ENCODE measurements at regions of chr17 and their contacts with region 1.

Region 1: DNA sequence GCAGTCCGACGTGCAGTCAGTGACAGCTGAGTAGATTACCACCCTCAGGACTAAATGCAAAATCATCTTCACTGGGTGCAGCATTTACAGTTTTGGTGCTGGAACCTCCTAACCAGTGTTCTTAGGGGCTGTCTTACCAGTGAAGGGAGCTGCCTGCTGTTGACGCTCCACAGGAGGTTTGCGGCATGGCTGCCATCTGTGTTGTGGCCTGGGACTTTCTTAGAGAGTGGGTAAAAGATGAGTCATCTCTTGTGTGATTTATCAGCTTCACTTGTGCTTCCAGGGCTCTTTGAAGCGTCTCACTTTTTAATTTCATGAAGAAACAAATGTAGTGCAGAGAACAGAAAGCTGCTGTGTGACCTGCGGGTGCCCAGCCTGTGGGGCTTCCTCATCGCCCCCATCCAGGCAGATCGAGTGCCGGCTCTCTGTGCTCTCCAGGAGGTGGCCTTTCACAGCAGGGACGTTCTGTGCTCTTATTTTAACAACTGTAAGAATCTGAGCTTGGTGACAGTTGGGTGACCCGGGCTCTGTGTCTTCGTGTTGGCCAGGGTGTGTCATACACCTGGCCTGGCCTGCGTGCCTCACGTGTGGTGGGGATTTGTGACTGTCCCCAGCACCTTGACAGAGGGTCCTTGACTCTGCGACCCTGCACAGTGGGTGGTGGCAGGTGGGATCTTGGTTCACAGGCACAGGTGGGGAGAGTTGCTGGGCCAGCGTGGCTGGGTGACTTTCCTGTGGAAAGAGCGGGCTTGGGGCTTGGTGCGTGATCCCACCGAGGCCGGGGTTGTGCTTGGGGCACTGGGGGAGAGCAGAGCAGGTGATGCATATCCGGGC is 24.3 kb upstream of the ZNF750 start:
- DNase-seq: peak; percentile 42 to 95 (median 93)
- ATAC-seq: peak; percentile 94
- H3K4me3 ChIP-seq: peak overlapping the region; percentile 54
- H3K4me3 Mint-ChIP-seq: peak overlapping the region; percentile 73 to 88 (median 83)
- H3K27ac ChIP-seq: peak overlapping the region; percentile 72
- H3K27ac Mint-ChIP-seq: peak overlapping the region; percentile 63 to 98 (median 97)
- H3K4me1 ChIP-seq: peaks cover 49 to 54% of the 10 kb centered on the region in 2 donors
- H3K4me1 Mint-ChIP-seq: peaks cover 38 to 73% (median 64%) of the 10 kb centered on the region in 7 donors
- H3K27me3 ChIP-seq: no peaks in the 10 kb centered on the region
- H3K27me3 Mint-ChIP-seq: no peaks in the 10 kb centered on the region

Region 2: DNA sequence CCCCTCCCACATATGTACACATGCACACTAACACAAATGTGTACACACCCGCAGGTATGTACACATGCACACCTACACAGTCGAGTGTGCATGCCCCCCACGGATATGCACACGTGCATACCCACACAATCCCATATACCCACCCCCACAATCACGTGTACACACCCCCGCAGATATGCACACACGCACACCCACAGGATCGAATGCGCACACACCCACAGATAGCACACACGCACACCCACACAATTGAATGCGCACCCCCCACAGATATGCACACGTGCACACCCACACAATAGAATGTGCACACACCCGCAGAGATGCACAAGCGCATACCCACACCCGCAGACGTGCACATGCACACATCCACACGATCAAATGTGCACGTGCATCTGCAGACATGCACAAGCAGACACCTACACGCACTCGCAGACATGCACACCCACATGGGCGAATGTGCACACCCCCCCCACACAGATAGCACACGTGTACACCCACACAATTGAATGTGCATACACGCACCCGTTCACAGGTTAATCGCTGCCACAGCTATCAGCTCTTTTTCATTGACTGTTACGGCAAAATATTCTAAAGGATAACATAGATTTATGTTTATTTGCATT is 35.2 kb before region 1 on chr17:
- CTCF ChIA-PET with region 1: no interaction called
- POLR2A ChIA-PET with region 1: interaction called, 4 read pairs
- intact Hi-C with region 1: loop called in 1 of 2 experiments (anchors 5 kb)
- DNase-seq: no peak
- ATAC-seq: no peak
- H3K4me3 ChIP-seq: no peak overlapping the region
- H3K4me3 Mint-ChIP-seq: no peak overlapping the region
- H3K27ac ChIP-seq: no peak overlapping the region
- H3K27ac Mint-ChIP-seq: peak overlapping the region in 1 of 9 donors; percentile 60
- H3K4me1 ChIP-seq: no peaks in the 10 kb centered on the region
- H3K4me1 Mint-ChIP-seq: peaks cover 0 to 9% (median 0%) of the 10 kb centered on the region in 7 donors
- H3K27me3 ChIP-seq: no peaks in the 10 kb centered on the region
- H3K27me3 Mint-ChIP-seq: no peaks in the 10 kb centered on the region

Region 3: DNA sequence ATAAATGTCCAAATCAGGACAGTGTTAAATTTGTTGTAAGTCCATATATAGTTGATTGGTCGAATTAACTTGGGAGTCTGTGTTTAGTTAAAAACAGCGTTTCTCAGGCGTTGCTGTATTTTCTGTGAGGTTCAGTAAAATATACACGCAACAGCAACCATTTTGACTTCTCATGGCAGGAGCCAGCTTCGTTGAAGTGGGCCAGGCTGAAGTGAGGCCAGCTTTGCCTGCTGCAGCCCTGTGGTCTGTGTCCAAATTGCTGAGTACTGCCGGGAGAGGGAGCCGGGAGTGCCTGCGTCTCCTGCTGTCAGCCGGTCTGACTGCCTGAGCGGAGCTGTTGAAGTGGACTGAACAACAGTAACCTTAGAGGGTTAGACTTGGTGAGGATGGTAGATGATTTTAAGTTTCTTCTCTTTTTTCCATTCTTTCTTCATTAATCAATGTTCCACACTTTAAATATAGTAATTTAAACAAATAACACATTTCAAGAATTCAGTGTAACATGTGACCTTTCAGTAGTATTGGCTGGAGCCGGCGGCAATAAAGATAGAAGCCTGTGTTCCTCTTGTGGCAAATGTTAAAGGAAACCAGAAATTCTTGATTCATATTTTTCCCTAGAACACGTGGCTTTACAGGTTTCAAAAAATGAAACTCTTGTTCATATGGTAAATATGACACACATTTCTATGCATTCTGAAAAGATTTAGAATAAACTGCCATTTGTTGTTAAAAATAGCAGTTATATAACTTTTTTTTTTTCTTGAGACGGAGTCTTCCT is 12.6 kb after region 1 on chr17:
- CTCF ChIA-PET with region 1: interaction called, 7 read pairs
- POLR2A ChIA-PET with region 1: interaction called, 84 read pairs
- intact Hi-C with region 1: no loop called
- DNase-seq: no peak
- ATAC-seq: peak; percentile 31
- H3K4me3 ChIP-seq: no peak overlapping the region
- H3K4me3 Mint-ChIP-seq: no peak overlapping the region
- H3K27ac ChIP-seq: no peak overlapping the region
- H3K27ac Mint-ChIP-seq: no peak overlapping the region
- H3K4me1 ChIP-seq: peaks cover 5 to 9% of the 10 kb centered on the region in 2 donors
- H3K4me1 Mint-ChIP-seq: peaks cover 18 to 60% (median 35%) of the 10 kb centered on the region in 7 donors
- H3K27me3 ChIP-seq: no peaks in the 10 kb centered on the region
- H3K27me3 Mint-ChIP-seq: no peaks in the 10 kb centered on the region

Region 4: DNA sequence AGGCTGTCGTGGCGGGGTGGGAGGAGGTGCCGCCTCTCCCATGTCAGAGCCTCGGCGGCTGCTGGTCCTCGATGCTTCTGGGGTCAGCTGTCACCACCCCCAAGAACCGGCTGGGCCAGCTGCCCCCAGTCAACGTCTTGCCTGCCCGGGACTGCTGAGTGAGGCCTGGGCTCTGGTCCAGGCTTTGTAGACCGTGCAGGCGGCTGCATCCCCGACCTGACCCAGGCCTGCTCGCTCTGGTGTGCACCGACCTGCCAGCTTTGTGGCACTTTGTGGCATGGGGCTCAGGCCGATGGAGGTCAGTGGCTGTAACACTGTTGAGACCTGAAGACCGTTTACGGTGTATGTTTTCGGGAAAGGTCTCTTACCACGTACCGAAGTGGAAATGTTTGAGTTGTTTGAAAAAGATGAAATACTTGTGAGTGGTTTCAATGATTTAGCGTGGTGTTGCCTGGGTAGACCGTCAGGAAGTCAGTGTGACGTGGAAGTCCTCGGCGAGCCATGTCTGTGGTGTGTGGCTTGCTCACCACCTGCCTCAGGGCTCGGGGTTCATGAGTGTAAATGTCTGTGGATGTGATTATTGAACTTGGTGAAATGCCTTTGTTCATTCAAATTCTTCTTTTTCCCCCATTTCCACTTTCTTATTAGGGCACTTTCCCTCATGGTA is 28.9 kb after region 1 on chr17:
- CTCF ChIA-PET with region 1: interaction called, 3 read pairs
- POLR2A ChIA-PET with region 1: interaction called, 26 read pairs
- intact Hi-C with region 1: loop called (anchors 1 kb)
- DNase-seq: peak in 8 of 9 donors; percentile 42 to 91 (median 74)
- ATAC-seq: peak; percentile 98
- H3K4me3 ChIP-seq: no peak overlapping the region
- H3K4me3 Mint-ChIP-seq: peak overlapping the region in 9 of 10 donors; percentile 43 to 82 (median 77)
- H3K27ac ChIP-seq: peak overlapping the region; percentile 67
- H3K27ac Mint-ChIP-seq: peak overlapping the region; percentile 78 to 97 (median 93)
- H3K4me1 ChIP-seq: peaks cover 17 to 23% of the 10 kb centered on the region in 2 donors
- H3K4me1 Mint-ChIP-seq: peaks cover 12 to 41% (median 33%) of the 10 kb centered on the region in 7 donors
- H3K27me3 ChIP-seq: no peaks in the 10 kb centered on the region
- H3K27me3 Mint-ChIP-seq: no peaks in the 10 kb centered on the region

Region 5: GRCh38 chr17:83051395-83052233 is 187.5 kb after region 1 on chr17:
- CTCF ChIA-PET with region 1: no interaction called
- POLR2A ChIA-PET with region 1: interaction called, 4 read pairs
- intact Hi-C with region 1: loop called in 1 of 2 experiments (anchors 5 kb)
- DNase-seq: peak; percentile 97 to 100 (median 99)
- ATAC-seq: peak; percentile 94
- H3K4me3 ChIP-seq: peak overlapping the region; percentile 75
- H3K4me3 Mint-ChIP-seq: peak overlapping the region; percentile 68 to 91 (median 83)
- H3K27ac ChIP-seq: peak overlapping the region; percentile 91
- H3K27ac Mint-ChIP-seq: peak overlapping the region; percentile 56 to 94 (median 89)
- H3K4me1 ChIP-seq: peaks cover 22 to 26% of the 10 kb centered on the region in 2 donors
- H3K4me1 Mint-ChIP-seq: peaks cover 17 to 39% (median 20%) of the 10 kb centered on the region in 7 donors
- H3K27me3 ChIP-seq: no peaks in the 10 kb centered on the region
- H3K27me3 Mint-ChIP-seq: no peaks in the 10 kb centered on the region